CD4-positive, alpha-beta T cell (primary cell): ENCODE measurements at regions of chr5 and their contacts with region 1.

Region 1: GRCh38 chr5:128290152-128290864 is 206.7 kb downstream of the SLC12A2 start:
- DNase-seq: no peak
- ATAC-seq: no peak
- H3K4me3 ChIP-seq: no peak overlapping the region
- H3K4me3 Mint-ChIP-seq: no peak overlapping the region
- H3K27ac ChIP-seq: no peak overlapping the region
- H3K27ac Mint-ChIP-seq: no peak overlapping the region
- H3K4me1 ChIP-seq: no peaks in the 10 kb centered on the region
- H3K4me1 Mint-ChIP-seq: no peaks in the 10 kb centered on the region
- H3K27me3 ChIP-seq: no peaks in the 10 kb centered on the region
- H3K27me3 Mint-ChIP-seq: no peaks in the 10 kb centered on the region
- CTCF ChIP-seq: no peak

Region 2: DNA sequence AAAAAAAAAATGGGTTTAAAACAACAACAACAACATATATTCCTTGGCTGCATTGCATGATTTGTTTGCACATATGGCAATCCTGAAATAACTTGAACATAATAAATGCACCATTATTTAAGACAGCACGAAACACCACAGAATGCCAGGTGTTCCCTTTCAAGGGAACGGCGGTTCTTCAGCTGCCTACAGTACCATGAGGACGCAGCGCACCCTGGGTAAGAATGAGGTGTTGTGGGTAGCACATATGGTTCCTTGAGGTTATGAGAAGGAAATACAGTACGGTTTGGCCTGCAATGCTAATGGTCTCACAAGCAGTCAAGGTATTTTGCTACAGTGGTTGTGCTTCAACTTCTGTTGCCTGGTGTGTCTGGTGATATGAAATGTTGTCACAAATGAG is 31.9 kb before region 1 on chr5:
- CTCF ChIA-PET with region 1: no interaction called
- POLR2A ChIA-PET with region 1: no interaction called
- intact Hi-C with region 1: loop called in 1 of 2 experiments (anchors 1 kb)
- DNase-seq: no peak
- ATAC-seq: no peak
- H3K4me3 ChIP-seq: no peak overlapping the region
- H3K4me3 Mint-ChIP-seq: no peak overlapping the region
- H3K27ac ChIP-seq: no peak overlapping the region
- H3K27ac Mint-ChIP-seq: no peak overlapping the region
- H3K4me1 ChIP-seq: no peaks in the 10 kb centered on the region
- H3K4me1 Mint-ChIP-seq: no peaks in the 10 kb centered on the region
- H3K27me3 ChIP-seq: no peaks in the 10 kb centered on the region
- H3K27me3 Mint-ChIP-seq: peaks cover 6% of the 10 kb centered on the region
- CTCF ChIP-seq: no peak

Region 3: DNA sequence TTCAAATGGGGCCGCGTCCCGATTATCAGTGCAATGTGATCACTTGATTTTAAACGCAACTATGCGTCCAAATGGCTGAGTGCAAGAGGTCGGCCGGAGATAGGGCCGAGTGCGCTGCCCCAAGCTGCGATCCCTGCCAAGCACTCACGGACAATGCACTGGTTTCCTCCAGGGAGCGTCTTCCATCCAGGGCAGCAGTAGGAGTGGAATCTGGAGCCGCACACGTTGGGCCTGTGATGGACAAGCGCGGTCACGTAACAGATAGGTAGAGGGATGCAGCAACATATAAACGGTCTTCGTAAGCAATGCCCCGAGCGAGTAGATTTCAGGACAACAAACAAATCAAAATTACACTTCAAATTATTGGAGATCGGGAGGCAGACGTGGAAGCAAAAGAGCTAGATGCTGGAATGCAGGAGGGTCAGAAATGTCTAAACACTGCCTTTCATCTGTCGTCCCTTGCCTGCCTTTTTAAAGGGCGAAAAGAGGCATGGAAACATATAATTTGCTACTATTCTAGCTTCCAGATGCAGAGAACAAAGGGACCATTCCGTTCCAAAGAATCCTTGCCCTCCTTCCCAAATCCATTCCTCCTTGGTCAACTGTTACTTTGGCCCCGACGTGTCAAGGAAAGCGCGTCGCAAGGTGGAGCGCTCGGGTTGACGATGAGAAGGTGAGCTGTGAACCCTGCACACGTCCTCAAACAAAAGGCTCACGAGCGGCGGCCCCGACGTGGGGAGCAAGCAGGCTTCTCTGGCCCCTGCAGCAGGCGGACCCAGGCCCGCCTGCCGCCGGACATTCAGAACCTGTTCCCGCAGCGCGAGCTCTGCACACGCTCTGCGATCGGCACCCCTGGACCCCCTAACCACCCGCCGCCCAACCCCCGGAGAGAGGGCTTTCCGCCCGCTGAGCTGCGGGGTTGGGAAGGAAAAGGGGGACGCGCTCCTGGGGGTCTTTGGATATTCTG is 246.2 kb after region 1 on chr5:
- CTCF ChIA-PET with region 1: no interaction called
- POLR2A ChIA-PET with region 1: no interaction called
- intact Hi-C with region 1: no loop called
- DNase-seq: peak in 1 of 14 experiments; percentile 3
- ATAC-seq: no peak
- H3K4me3 ChIP-seq: peak overlapping the region; percentile 20
- H3K4me3 Mint-ChIP-seq: no peak overlapping the region
- H3K27ac ChIP-seq: no peak overlapping the region
- H3K27ac Mint-ChIP-seq: no peak overlapping the region
- H3K4me1 ChIP-seq: no peaks in the 10 kb centered on the region
- H3K4me1 Mint-ChIP-seq: no peaks in the 10 kb centered on the region
- H3K27me3 ChIP-seq: peaks cover 30 to 42% of the 10 kb centered on the region in 2 experiments
- H3K27me3 Mint-ChIP-seq: peaks cover 51% of the 10 kb centered on the region
- CTCF ChIP-seq: no peak